B cell (primary cell): ENCODE measurements at regions of chr2 and their contacts with region 1.

Region 1: GRCh38 chr2:99878581-99879350 is 263.6 kb downstream of the AFF3 start:
- DNase-seq: no peak
- ATAC-seq: no peak
- H3K4me3 ChIP-seq: no peak overlapping the region
- H3K4me3 Mint-ChIP-seq: peak overlapping the region; percentile 42
- H3K27ac ChIP-seq: no peak overlapping the region
- H3K27ac Mint-ChIP-seq: no peak overlapping the region
- H3K4me1 ChIP-seq: peaks cover 45 to 50% of the 10 kb centered on the region in 2 donors
- H3K4me1 Mint-ChIP-seq: peaks cover 73% of the 10 kb centered on the region
- H3K27me3 ChIP-seq: no peaks in the 10 kb centered on the region
- H3K27me3 Mint-ChIP-seq: no peaks in the 10 kb centered on the region
- CTCF ChIP-seq: no peak

Region 2: GRCh38 chr2:99841749-99842148 is 37.0 kb before region 1 on chr2:
- CTCF ChIA-PET with region 1: no interaction called
- POLR2A ChIA-PET with region 1: no interaction called
- intact Hi-C with region 1: loop called (anchors 5 kb)
- DNase-seq: no peak
- ATAC-seq: no peak
- H3K4me3 ChIP-seq: no peak overlapping the region
- H3K4me3 Mint-ChIP-seq: no peak overlapping the region
- H3K27ac ChIP-seq: peak overlapping the region in 1 of 2 donors; percentile 4
- H3K27ac Mint-ChIP-seq: peak overlapping the region; percentile 32
- H3K4me1 ChIP-seq: no peaks in the 10 kb centered on the region
- H3K4me1 Mint-ChIP-seq: peaks cover 9% of the 10 kb centered on the region
- H3K27me3 ChIP-seq: no peaks in the 10 kb centered on the region
- H3K27me3 Mint-ChIP-seq: no peaks in the 10 kb centered on the region
- CTCF ChIP-seq: no peak

Region 3: GRCh38 chr2:99864561-99865553 is 13.9 kb before region 1 on chr2:
- CTCF ChIA-PET with region 1: no interaction called
- POLR2A ChIA-PET with region 1: no interaction called
- intact Hi-C with region 1: loop called (anchors 2 kb)
- DNase-seq: no peak
- ATAC-seq: no peak
- H3K4me3 ChIP-seq: no peak overlapping the region
- H3K4me3 Mint-ChIP-seq: no peak overlapping the region
- H3K27ac ChIP-seq: no peak overlapping the region
- H3K27ac Mint-ChIP-seq: peak overlapping the region; percentile 61
- H3K4me1 ChIP-seq: peaks cover 58 to 64% of the 10 kb centered on the region in 2 donors
- H3K4me1 Mint-ChIP-seq: peaks cover 84% of the 10 kb centered on the region
- H3K27me3 ChIP-seq: no peaks in the 10 kb centered on the region
- H3K27me3 Mint-ChIP-seq: no peaks in the 10 kb centered on the region
- CTCF ChIP-seq: no peak

Region 4: GRCh38 chr2:99984799-99985515 is 106.2 kb after region 1 on chr2:
- CTCF ChIA-PET with region 1: no interaction called
- POLR2A ChIA-PET with region 1: no interaction called
- intact Hi-C with region 1: no loop called
- DNase-seq: no peak
- ATAC-seq: no peak
- H3K4me3 ChIP-seq: no peak overlapping the region
- H3K4me3 Mint-ChIP-seq: no peak overlapping the region
- H3K27ac ChIP-seq: no peak overlapping the region
- H3K27ac Mint-ChIP-seq: peak overlapping the region; percentile 26
- H3K4me1 ChIP-seq: no peaks in the 10 kb centered on the region
- H3K4me1 Mint-ChIP-seq: peaks cover 4% of the 10 kb centered on the region
- H3K27me3 ChIP-seq: no peaks in the 10 kb centered on the region
- H3K27me3 Mint-ChIP-seq: no peaks in the 10 kb centered on the region
- CTCF ChIP-seq: no peak

Region 5: GRCh38 chr2:100524331-100524730 is 645.6 kb after region 1 on chr2:
- CTCF ChIA-PET with region 1: no interaction called
- POLR2A ChIA-PET with region 1: no interaction called
- intact Hi-C with region 1: no loop called
- DNase-seq: no peak
- ATAC-seq: no peak
- H3K4me3 ChIP-seq: no peak overlapping the region
- H3K4me3 Mint-ChIP-seq: no peak overlapping the region
- H3K27ac ChIP-seq: no peak overlapping the region
- H3K27ac Mint-ChIP-seq: no peak overlapping the region
- H3K4me1 ChIP-seq: no peaks in the 10 kb centered on the region
- H3K4me1 Mint-ChIP-seq: no peaks in the 10 kb centered on the region
- H3K27me3 ChIP-seq: peaks cover 0 to 3% (median 0%) of the 10 kb centered on the region in 4 experiments
- H3K27me3 Mint-ChIP-seq: peaks cover 18% of the 10 kb centered on the region
- CTCF ChIP-seq: no peak